CD8-positive, alpha-beta T cell (primary cell): ENCODE measurements at regions of chr1 and their contacts with region 1.

Region 1: GRCh38 chr1:24415334-24415909 is at the start of gene NIPAL3:
- DNase-seq: peak; percentile 94 to 99 (median 97)
- ATAC-seq: peak; percentile 94
- H3K4me3 ChIP-seq: peak within 1 kb of the TSS; percentile 78 to 98
- H3K4me3 Mint-ChIP-seq: peak within 1 kb of the TSS; percentile 97
- H3K27ac ChIP-seq: peak within 1 kb of the TSS; percentile 57 to 64
- H3K27ac Mint-ChIP-seq: peak within 1 kb of the TSS; percentile 93
- H3K4me1 ChIP-seq: peaks cover 43% of the 10 kb centered on the region
- H3K4me1 Mint-ChIP-seq: peaks cover 79% of the 10 kb centered on the region
- H3K27me3 ChIP-seq: no peaks in the 10 kb centered on the region
- H3K27me3 Mint-ChIP-seq: no peaks in the 10 kb centered on the region
- CTCF ChIP-seq: peak; percentile 74
- total RNA-seq, gene NIPAL3: 22.3 to 22.7 TPM

Region 2: GRCh38 chr1:23979878-23980724 is 435.3 kb before region 1 on chr1 and contains the start of gene SRSF10:
- CTCF ChIA-PET with region 1: no interaction called
- POLR2A ChIA-PET with region 1: no interaction called
- intact Hi-C with region 1: loop called in 1 of 2 experiments (anchors 1 kb)
- DNase-seq: peak; percentile 94 to 100 (median 97)
- ATAC-seq: peak; percentile 96
- H3K4me3 ChIP-seq: peak within 1 kb of the TSS; percentile 87 to 94
- H3K4me3 Mint-ChIP-seq: peak within 1 kb of the TSS; percentile 92
- H3K27ac ChIP-seq: peak within 1 kb of the TSS; percentile 92 to 98
- H3K27ac Mint-ChIP-seq: peak within 1 kb of the TSS; percentile 92
- H3K4me1 ChIP-seq: peaks cover 41% of the 10 kb centered on the region
- H3K4me1 Mint-ChIP-seq: peaks cover 52% of the 10 kb centered on the region
- H3K27me3 ChIP-seq: no peaks in the 10 kb centered on the region
- H3K27me3 Mint-ChIP-seq: no peaks in the 10 kb centered on the region
- CTCF ChIP-seq: peak; percentile 18
- total RNA-seq, gene SRSF10: 321 to 335 TPM

Region 3: GRCh38 chr1:24403806-24404205 is 11.6 kb before region 1 on chr1:
- CTCF ChIA-PET with region 1: interaction called, 11 read pairs
- POLR2A ChIA-PET with region 1: interaction called, 4 read pairs
- intact Hi-C with region 1: no loop called
- DNase-seq: no peak
- ATAC-seq: no peak
- H3K4me3 ChIP-seq: no peak overlapping the region
- H3K4me3 Mint-ChIP-seq: no peak overlapping the region
- H3K27ac ChIP-seq: no peak overlapping the region
- H3K27ac Mint-ChIP-seq: no peak overlapping the region
- H3K4me1 ChIP-seq: no peaks in the 10 kb centered on the region
- H3K4me1 Mint-ChIP-seq: no peaks in the 10 kb centered on the region
- H3K27me3 ChIP-seq: no peaks in the 10 kb centered on the region
- H3K27me3 Mint-ChIP-seq: no peaks in the 10 kb centered on the region
- CTCF ChIP-seq: no peak

Region 4: GRCh38 chr1:24486331-24487065 is 71.1 kb after region 1 on chr1:
- CTCF ChIA-PET with region 1: interaction called, 18 read pairs
- POLR2A ChIA-PET with region 1: interaction called, 6 read pairs
- intact Hi-C with region 1: loop called (anchors 5 kb)
- DNase-seq: peak in 7 of 9 experiments; percentile 9 to 80 (median 53)
- ATAC-seq: peak; percentile 30
- H3K4me3 ChIP-seq: peak overlapping the region in 1 of 2 experiments; percentile 3
- H3K4me3 Mint-ChIP-seq: peak overlapping the region; percentile 50
- H3K27ac ChIP-seq: peak overlapping the region; percentile 29 to 41
- H3K27ac Mint-ChIP-seq: peak overlapping the region; percentile 98
- H3K4me1 ChIP-seq: peaks cover 82% of the 10 kb centered on the region
- H3K4me1 Mint-ChIP-seq: peaks cover 72% of the 10 kb centered on the region
- H3K27me3 ChIP-seq: no peaks in the 10 kb centered on the region
- H3K27me3 Mint-ChIP-seq: no peaks in the 10 kb centered on the region
- CTCF ChIP-seq: no peak

Region 5: DNA sequence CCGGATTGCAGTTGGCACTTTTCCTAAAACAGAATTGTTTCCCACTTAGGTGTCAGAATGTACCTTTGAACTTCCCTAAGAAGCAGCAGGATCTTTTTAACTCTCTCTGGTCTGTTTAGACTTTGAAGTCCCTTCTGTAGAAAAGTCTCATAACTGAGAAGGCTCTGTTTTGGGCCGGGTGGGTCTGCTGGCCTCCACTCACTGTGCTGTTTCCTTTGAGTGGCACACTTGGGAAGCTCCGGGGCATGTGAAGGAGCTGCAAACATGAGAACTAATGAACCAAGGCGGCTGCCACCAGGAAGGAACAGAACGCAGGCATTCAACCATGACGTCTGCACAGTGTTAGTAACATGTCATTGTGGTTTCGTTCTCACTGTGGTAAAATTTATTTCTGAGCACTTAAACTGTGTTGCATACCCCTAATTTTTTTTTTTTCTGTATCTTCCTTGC is 121.0 kb after region 1 on chr1:
- CTCF ChIA-PET with region 1: interaction called, 21 read pairs
- POLR2A ChIA-PET with region 1: interaction called, 6 read pairs
- intact Hi-C with region 1: loop called (anchors 2 kb)
- DNase-seq: peak; percentile 54 to 96 (median 69)
- ATAC-seq: peak; percentile 77
- H3K4me3 ChIP-seq: no peak overlapping the region
- H3K4me3 Mint-ChIP-seq: peak overlapping the region; percentile 83
- H3K27ac ChIP-seq: peak overlapping the region; percentile 86
- H3K27ac Mint-ChIP-seq: peak overlapping the region; percentile 99
- H3K4me1 ChIP-seq: peaks cover 60% of the 10 kb centered on the region
- H3K4me1 Mint-ChIP-seq: peaks cover 73% of the 10 kb centered on the region
- H3K27me3 ChIP-seq: no peaks in the 10 kb centered on the region
- H3K27me3 Mint-ChIP-seq: no peaks in the 10 kb centered on the region
- CTCF ChIP-seq: no peak

Region 6: GRCh38 chr1:24635195-24635843 is 219.9 kb after region 1 on chr1:
- CTCF ChIA-PET with region 1: interaction called, 12 read pairs
- POLR2A ChIA-PET with region 1: no interaction called
- intact Hi-C with region 1: no loop called
- DNase-seq: peak in 2 of 9 experiments; percentile 63 to 75
- ATAC-seq: peak; percentile 93
- H3K4me3 ChIP-seq: no peak overlapping the region
- H3K4me3 Mint-ChIP-seq: no peak overlapping the region
- H3K27ac ChIP-seq: no peak overlapping the region
- H3K27ac Mint-ChIP-seq: no peak overlapping the region
- H3K4me1 ChIP-seq: no peaks in the 10 kb centered on the region
- H3K4me1 Mint-ChIP-seq: peaks cover 2% of the 10 kb centered on the region
- H3K27me3 ChIP-seq: peaks cover 0 to 3% of the 10 kb centered on the region in 2 experiments
- H3K27me3 Mint-ChIP-seq: peaks cover 4% of the 10 kb centered on the region
- CTCF ChIP-seq: peak; percentile 57